ENCODE measurements at regions of chr17 and their contacts with region 1.

Region 1: GRCh38 chr17:34199932-34200534 is 55.1 kb upstream of the CCL2 start:
- DNase-seq: peak; percentile 87
- ATAC-seq: peak; percentile 95
- H3K4me3 ChIP-seq: no peak overlapping the region
- H3K27ac ChIP-seq: peak overlapping the region; percentile 78
- H3K4me1 ChIP-seq: peaks cover 3% of the 10 kb centered on the region; the same call in 1 of the 2 replicates
- H3K27me3 ChIP-seq: no peaks in the 10 kb centered on the region
- CTCF ChIP-seq: peak; percentile 99

Region 2: GRCh38 chr17:34254651-34255380 is 54.8 kb after region 1 on chr17 and contains the start of gene CCL2:
- CTCF ChIA-PET with region 1: interaction called, 5 read pairs
- POLR2A ChIA-PET with region 1: interaction called, 3 read pairs
- in situ Hi-C with region 1: no loop called
- intact Hi-C with region 1: loop called (anchors 5 kb)
- DNase-seq: no peak
- ATAC-seq: peak; percentile 67
- H3K4me3 ChIP-seq: peak within 1 kb of the TSS; percentile 62 to 81
- H3K27ac ChIP-seq: peak within 1 kb of the TSS; percentile 98
- H3K4me1 ChIP-seq: peaks cover 68% of the 10 kb centered on the region
- H3K27me3 ChIP-seq: no peaks in the 10 kb centered on the region
- CTCF ChIP-seq: no peak
- total RNA-seq, gene CCL2: 513 TPM

Region 3: GRCh38 chr17:34275881-34276280 is 75.8 kb after region 1 on chr17:
- CTCF ChIA-PET with region 1: no interaction called
- POLR2A ChIA-PET with region 1: no interaction called
- in situ Hi-C with region 1: no loop called
- intact Hi-C with region 1: no loop called
- DNase-seq: no peak
- ATAC-seq: peak; percentile 98
- H3K4me3 ChIP-seq: no peak overlapping the region
- H3K27ac ChIP-seq: peak overlapping the region; percentile 46; the same call in 1 of the 2 replicates
- H3K4me1 ChIP-seq: peaks cover 10% of the 10 kb centered on the region
- H3K27me3 ChIP-seq: no peaks in the 10 kb centered on the region
- CTCF ChIP-seq: no peak

Region 4: GRCh38 chr17:34306466-34306865 is 106.4 kb after region 1 on chr17:
- CTCF ChIA-PET with region 1: interaction called, 10 read pairs
- POLR2A ChIA-PET with region 1: no interaction called
- in situ Hi-C with region 1: no loop called
- intact Hi-C with region 1: loop called (anchors 10 kb)
- DNase-seq: no peak
- ATAC-seq: peak; percentile 80; the same call in 1 of the 2 replicates
- H3K4me3 ChIP-seq: no peak overlapping the region
- H3K27ac ChIP-seq: no peak overlapping the region
- H3K4me1 ChIP-seq: no peaks in the 10 kb centered on the region
- H3K27me3 ChIP-seq: no peaks in the 10 kb centered on the region
- CTCF ChIP-seq: peak; percentile 35

Measured in Panc1 (cell line).